ENCODE measurements at regions of chr19 and their contacts with region 1.

Region 1: DNA sequence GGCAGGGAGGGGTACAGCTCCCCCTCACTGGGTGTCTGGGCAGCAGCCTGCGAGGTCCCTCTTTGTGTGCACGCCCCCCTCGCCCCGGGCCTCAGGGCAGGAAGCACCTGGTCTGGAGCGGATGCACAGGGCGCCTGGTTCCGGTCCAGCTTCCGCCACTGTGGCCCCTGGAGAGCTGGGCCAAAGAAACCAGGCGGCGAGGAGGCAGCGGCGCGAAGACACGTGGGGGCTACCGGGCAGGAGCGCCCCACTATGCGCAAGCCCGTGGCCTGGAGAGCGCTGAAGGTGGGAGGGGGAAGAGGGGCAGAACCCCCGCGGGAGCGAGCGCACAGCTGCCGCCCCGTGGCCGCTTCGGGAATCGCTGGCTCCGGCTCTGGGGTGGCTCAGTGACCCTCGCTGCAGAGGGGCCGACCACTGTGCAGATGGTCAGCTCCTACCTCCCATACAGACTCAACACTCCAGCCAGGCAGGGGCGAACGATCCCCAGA is 1.7 kb upstream of the LYL1 start:
- DNase-seq: peak; percentile 40 to 81 (median 59)
- ATAC-seq: peak; percentile 53
- H3K4me3 ChIP-seq: peak overlapping the region; percentile 77
- H3K4me3 Mint-ChIP-seq: peak overlapping the region; percentile 93
- H3K27ac ChIP-seq: peak overlapping the region; percentile 41 to 66
- H3K27ac Mint-ChIP-seq: peak overlapping the region; percentile 89
- H3K4me1 ChIP-seq: peaks cover 68% of the 10 kb centered on the region
- H3K4me1 Mint-ChIP-seq: peaks cover 38% of the 10 kb centered on the region
- H3K27me3 ChIP-seq: no peaks in the 10 kb centered on the region
- H3K27me3 Mint-ChIP-seq: no peaks in the 10 kb centered on the region
- CTCF ChIP-seq: peak; percentile 86

Region 2: GRCh38 chr19:12551060-12551832 is 553.2 kb before region 1 on chr19 and contains the start of gene ZNF564:
- CTCF ChIA-PET with region 1: no interaction called
- POLR2A ChIA-PET with region 1: no interaction called
- intact Hi-C with region 1: no loop called
- DNase-seq: peak; percentile 80 to 98 (median 86)
- ATAC-seq: peak; percentile 97
- H3K4me3 ChIP-seq: peak within 1 kb of the TSS; percentile 98
- H3K4me3 Mint-ChIP-seq: peak within 1 kb of the TSS; percentile 89
- H3K27ac ChIP-seq: peak within 1 kb of the TSS; percentile 77 to 87
- H3K27ac Mint-ChIP-seq: peak within 1 kb of the TSS; percentile 85
- H3K4me1 ChIP-seq: peaks cover 43% of the 10 kb centered on the region
- H3K4me1 Mint-ChIP-seq: peaks cover 46% of the 10 kb centered on the region
- H3K27me3 ChIP-seq: no peaks in the 10 kb centered on the region
- H3K27me3 Mint-ChIP-seq: no peaks in the 10 kb centered on the region
- CTCF ChIP-seq: no peak
- total RNA-seq, gene ZNF564: 17.3 to 18.0 TPM

Region 3: GRCh38 chr19:12974301-12975220 is 129.8 kb before region 1 on chr19:
- CTCF ChIA-PET with region 1: interaction called, 17 read pairs
- POLR2A ChIA-PET with region 1: interaction called, 7 read pairs
- intact Hi-C with region 1: no loop called
- DNase-seq: no peak
- ATAC-seq: no peak
- H3K4me3 ChIP-seq: no peak overlapping the region
- H3K4me3 Mint-ChIP-seq: no peak overlapping the region
- H3K27ac ChIP-seq: no peak overlapping the region
- H3K27ac Mint-ChIP-seq: no peak overlapping the region
- H3K4me1 ChIP-seq: no peaks in the 10 kb centered on the region
- H3K4me1 Mint-ChIP-seq: no peaks in the 10 kb centered on the region
- H3K27me3 ChIP-seq: peaks cover 7 to 8% of the 10 kb centered on the region in 2 experiments
- H3K27me3 Mint-ChIP-seq: peaks cover 13% of the 10 kb centered on the region
- CTCF ChIP-seq: no peak

Region 4: DNA sequence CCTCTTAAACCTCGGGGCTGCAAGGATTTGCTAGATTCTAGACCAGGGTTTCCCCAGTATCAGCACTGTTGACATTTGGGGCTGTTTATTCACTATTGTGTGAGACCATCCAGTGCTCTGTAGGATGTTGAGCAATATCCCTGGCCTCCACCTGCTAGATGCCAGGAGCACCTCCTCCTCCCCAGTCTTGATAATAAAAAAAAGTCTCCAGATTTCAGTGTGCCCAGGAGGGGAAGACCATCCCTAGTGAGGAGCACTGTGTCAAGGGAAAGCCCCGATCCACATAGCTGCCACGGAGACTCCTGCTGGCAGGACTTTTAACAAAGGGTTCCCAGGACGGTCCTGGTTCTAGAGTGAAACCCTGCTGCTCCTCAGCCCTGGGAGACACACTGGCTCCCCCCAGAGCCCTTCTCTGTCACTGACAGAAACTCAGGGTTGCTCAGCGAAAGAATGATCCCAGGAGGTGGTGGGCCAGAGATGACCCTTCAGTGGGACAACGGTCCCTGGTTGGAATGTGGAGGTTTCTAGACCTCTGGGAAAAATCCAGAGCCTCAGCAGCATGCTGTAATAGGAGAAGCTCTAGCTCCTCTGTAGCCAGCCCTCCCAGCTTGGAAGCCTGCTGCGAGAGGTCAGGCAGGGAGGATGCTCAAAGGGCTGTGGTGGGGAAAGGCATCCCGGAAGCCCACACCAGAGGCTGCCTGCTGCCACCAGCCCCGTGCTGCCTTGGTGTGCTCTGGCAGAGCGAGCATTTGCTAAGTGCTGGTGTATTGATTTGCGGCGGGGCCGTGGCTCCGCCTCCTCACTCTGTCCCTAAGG is 22.0 kb before region 1 on chr19:
- CTCF ChIA-PET with region 1: no interaction called
- POLR2A ChIA-PET with region 1: no interaction called
- intact Hi-C with region 1: no loop called
- DNase-seq: no peak
- ATAC-seq: no peak
- H3K4me3 ChIP-seq: no peak overlapping the region
- H3K4me3 Mint-ChIP-seq: no peak overlapping the region
- H3K27ac ChIP-seq: no peak overlapping the region
- H3K27ac Mint-ChIP-seq: no peak overlapping the region
- H3K4me1 ChIP-seq: peaks cover 12% of the 10 kb centered on the region
- H3K4me1 Mint-ChIP-seq: no peaks in the 10 kb centered on the region
- H3K27me3 ChIP-seq: no peaks in the 10 kb centered on the region
- H3K27me3 Mint-ChIP-seq: no peaks in the 10 kb centered on the region
- CTCF ChIP-seq: no peak

Region 5: DNA sequence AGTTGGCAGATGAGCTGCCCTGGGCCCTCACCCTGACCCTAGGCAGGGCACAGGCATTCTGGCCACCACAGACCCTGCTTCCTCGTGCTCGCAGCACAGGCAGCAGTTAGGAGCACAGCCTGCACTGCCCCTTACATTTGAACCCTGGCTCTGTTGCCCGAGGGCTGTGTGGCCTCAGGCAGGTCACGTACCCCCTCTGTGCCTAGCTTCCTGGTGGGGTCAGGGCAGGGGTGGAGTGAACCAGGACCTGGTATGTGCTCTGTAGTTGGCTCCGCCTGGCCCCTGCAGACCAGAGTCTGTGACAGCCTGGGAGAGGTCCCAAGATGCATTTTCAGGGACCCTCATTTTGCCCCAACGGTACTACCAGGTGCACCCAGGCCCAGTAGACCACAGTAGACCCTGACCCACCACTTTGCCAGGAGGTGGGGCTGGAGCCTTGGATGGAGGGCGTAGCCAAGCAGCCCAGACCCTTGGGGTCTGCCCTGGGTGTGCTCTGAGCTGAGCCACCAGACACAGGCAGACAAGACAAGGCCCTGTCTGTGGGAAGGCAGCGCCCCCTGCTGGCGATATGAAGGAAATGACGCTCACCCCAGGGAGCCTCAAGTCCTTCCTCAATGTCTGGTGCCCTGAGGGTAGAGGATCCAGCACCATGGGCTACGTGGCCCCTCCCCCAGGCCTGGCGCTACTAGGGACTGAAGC is 10.8 kb before region 1 on chr19:
- CTCF ChIA-PET with region 1: interaction called, 27 read pairs
- POLR2A ChIA-PET with region 1: interaction called, 16 read pairs
- intact Hi-C with region 1: no loop called
- DNase-seq: peak; percentile 68 to 91 (median 76)
- ATAC-seq: peak; percentile 73
- H3K4me3 ChIP-seq: no peak overlapping the region
- H3K4me3 Mint-ChIP-seq: peak overlapping the region; percentile 51
- H3K27ac ChIP-seq: no peak overlapping the region
- H3K27ac Mint-ChIP-seq: no peak overlapping the region
- H3K4me1 ChIP-seq: peaks cover 48% of the 10 kb centered on the region
- H3K4me1 Mint-ChIP-seq: peaks cover 27% of the 10 kb centered on the region
- H3K27me3 ChIP-seq: peaks cover 20 to 23% of the 10 kb centered on the region in 2 experiments
- H3K27me3 Mint-ChIP-seq: peaks cover 29% of the 10 kb centered on the region
- CTCF ChIP-seq: peak; percentile 89

Region 6: GRCh38 chr19:13117772-13118423 is 13.5 kb after region 1 on chr19 and contains the start of gene NACC1:
- CTCF ChIA-PET with region 1: interaction called, 13 read pairs
- POLR2A ChIA-PET with region 1: interaction called, 32 read pairs
- intact Hi-C with region 1: loop called in 1 of 2 experiments (anchors 2 kb)
- DNase-seq: peak; percentile 77 to 94 (median 87)
- ATAC-seq: peak; percentile 79
- H3K4me3 ChIP-seq: peak within 1 kb of the TSS; percentile 99
- H3K4me3 Mint-ChIP-seq: peak within 1 kb of the TSS; percentile 96
- H3K27ac ChIP-seq: peak within 1 kb of the TSS in 1 of 2 donors; percentile 48
- H3K27ac Mint-ChIP-seq: peak within 1 kb of the TSS; percentile 73
- H3K4me1 ChIP-seq: peaks cover 61% of the 10 kb centered on the region
- H3K4me1 Mint-ChIP-seq: peaks cover 66% of the 10 kb centered on the region
- H3K27me3 ChIP-seq: no peaks in the 10 kb centered on the region
- H3K27me3 Mint-ChIP-seq: no peaks in the 10 kb centered on the region
- CTCF ChIP-seq: no peak
- total RNA-seq, gene NACC1: 13.0 to 13.5 TPM